ENCODE measurements at regions of chr10 and their contacts with region 1.

Region 1: DNA sequence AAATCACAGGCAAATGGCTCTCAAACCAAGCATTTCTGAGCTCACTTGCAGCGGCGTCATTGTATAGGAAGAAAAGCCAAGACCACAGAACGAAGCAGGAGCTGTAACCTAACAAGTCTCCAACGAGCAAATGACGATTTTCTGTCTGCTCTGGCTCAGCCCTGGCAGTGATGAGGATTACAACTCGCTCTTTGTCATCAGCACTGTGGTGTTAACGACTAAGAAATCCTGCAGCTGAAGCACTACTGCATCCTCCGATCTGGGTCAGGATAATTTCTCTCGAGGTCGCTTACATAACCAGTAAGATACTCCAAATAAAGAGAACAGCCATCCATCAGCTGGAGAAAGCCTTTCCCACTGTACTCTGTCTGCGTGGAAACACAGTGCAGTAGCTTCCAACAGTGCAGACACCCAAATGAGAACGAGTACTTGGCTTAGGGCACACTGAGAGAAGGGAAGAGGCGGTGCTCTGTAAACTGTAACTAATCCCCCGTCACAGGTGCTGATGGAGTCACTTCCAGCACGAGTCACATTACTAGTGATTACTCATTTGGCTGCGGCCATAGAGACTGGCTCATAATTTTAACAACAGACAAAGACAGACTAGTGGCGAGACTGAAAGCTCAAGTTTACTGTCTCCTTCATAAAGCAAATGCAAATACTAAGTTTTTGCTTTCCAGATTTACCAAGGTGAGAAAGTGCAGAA is 135.8 kb downstream of the NRBF2 start:
- DNase-seq: peak; percentile 98
- H3K4me3 ChIP-seq: peak overlapping the region; percentile 75 to 99 (median 85)
- H3K27ac ChIP-seq: peak overlapping the region; percentile 92
- H3K4me1 ChIP-seq: peaks cover 31% of the 10 kb centered on the region
- H3K27me3 ChIP-seq: no peaks in the 10 kb centered on the region
- CTCF ChIP-seq: peak in 1 of 2 donors; percentile 23
- POLR2A ChIP-seq: peak; percentile 99

Region 2: GRCh38 chr10:63166742-63167258 is 102.2 kb before region 1 on chr10:
- CTCF ChIA-PET with region 1: interaction called, 4 read pairs
- POLR2A ChIA-PET with region 1: no interaction called
- dilution Hi-C with region 1: no loop called
- intact Hi-C with region 1: loop called (anchors 2 kb)
- DNase-seq: peak; percentile 84
- H3K4me3 ChIP-seq: no peak overlapping the region
- H3K27ac ChIP-seq: no peak overlapping the region
- H3K4me1 ChIP-seq: no peaks in the 10 kb centered on the region
- H3K27me3 ChIP-seq: no peaks in the 10 kb centered on the region
- CTCF ChIP-seq: peak; percentile 61 to 62
- POLR2A ChIP-seq: no peak

Region 3: GRCh38 chr10:63217120-63217605 is 51.8 kb before region 1 on chr10:
- CTCF ChIA-PET with region 1: interaction called, 22 read pairs
- POLR2A ChIA-PET with region 1: interaction called, 7 read pairs
- dilution Hi-C with region 1: no loop called
- intact Hi-C with region 1: loop called (anchors 1 kb)
- DNase-seq: peak; percentile 74
- H3K4me3 ChIP-seq: no peak overlapping the region
- H3K27ac ChIP-seq: peak overlapping the region; percentile 30
- H3K4me1 ChIP-seq: peaks cover 4% of the 10 kb centered on the region
- H3K27me3 ChIP-seq: no peaks in the 10 kb centered on the region
- CTCF ChIP-seq: peak; percentile 34 to 38
- POLR2A ChIP-seq: no peak

Region 4: DNA sequence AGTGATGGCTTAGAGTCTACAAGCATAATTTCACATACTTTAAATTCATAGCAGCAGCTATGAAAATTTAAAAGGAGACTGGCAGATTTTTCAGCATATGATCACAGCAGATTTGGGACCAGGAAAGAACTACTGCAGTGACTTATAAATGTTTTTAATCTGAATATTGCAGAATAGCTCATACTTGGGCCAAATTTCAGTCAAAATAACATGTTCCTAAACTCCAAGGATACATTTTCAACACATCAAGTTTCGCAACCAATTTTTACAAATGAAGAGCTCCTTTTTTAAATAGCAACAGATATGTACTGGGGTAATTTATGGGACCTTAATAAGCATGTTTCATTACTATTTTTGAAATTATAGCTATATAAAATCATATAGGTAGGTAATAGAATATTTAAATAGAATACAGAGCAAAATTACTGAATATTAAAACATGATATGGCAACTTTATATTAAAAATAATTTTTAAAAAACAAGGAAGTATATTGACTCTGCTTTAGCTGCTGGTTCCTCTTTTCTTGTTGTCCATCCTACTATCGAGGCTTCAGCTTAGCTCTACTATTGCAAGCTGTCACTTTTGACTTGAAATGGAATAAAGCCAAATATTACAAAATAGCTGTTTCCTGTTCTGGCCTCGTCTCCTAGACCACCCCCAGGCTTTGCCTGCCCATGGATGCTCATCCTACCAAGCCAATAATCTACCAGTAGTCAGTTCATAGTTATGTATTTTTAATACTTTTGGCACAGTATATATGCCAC is 12.8 kb before region 1 on chr10:
- CTCF ChIA-PET with region 1: interaction called, 10 read pairs
- POLR2A ChIA-PET with region 1: interaction called, 10 read pairs
- dilution Hi-C with region 1: no loop called
- intact Hi-C with region 1: no loop called
- DNase-seq: peak; percentile 42
- H3K4me3 ChIP-seq: no peak overlapping the region
- H3K27ac ChIP-seq: no peak overlapping the region
- H3K4me1 ChIP-seq: peaks cover 21% of the 10 kb centered on the region
- H3K27me3 ChIP-seq: no peaks in the 10 kb centered on the region
- CTCF ChIP-seq: no peak
- POLR2A ChIP-seq: no peak

Region 5: GRCh38 chr10:63313066-63313717 is 44.2 kb after region 1 on chr10:
- CTCF ChIA-PET with region 1: no interaction called
- POLR2A ChIA-PET with region 1: no interaction called
- dilution Hi-C with region 1: no loop called
- intact Hi-C with region 1: no loop called
- DNase-seq: no peak
- H3K4me3 ChIP-seq: no peak overlapping the region
- H3K27ac ChIP-seq: no peak overlapping the region
- H3K4me1 ChIP-seq: no peaks in the 10 kb centered on the region
- H3K27me3 ChIP-seq: no peaks in the 10 kb centered on the region
- CTCF ChIP-seq: no peak
- POLR2A ChIP-seq: no peak

Region 6: GRCh38 chr10:63430097-63430998 is 161.4 kb after region 1 on chr10:
- CTCF ChIA-PET with region 1: interaction called, 3 read pairs
- POLR2A ChIA-PET with region 1: interaction called, 8 read pairs
- dilution Hi-C with region 1: no loop called
- intact Hi-C with region 1: loop called (anchors 1 kb)
- DNase-seq: peak; percentile 83
- H3K4me3 ChIP-seq: no peak overlapping the region
- H3K27ac ChIP-seq: peak overlapping the region; percentile 92
- H3K4me1 ChIP-seq: peaks cover 55% of the 10 kb centered on the region
- H3K27me3 ChIP-seq: no peaks in the 10 kb centered on the region
- CTCF ChIP-seq: no peak
- POLR2A ChIP-seq: no peak

Region 7: DNA sequence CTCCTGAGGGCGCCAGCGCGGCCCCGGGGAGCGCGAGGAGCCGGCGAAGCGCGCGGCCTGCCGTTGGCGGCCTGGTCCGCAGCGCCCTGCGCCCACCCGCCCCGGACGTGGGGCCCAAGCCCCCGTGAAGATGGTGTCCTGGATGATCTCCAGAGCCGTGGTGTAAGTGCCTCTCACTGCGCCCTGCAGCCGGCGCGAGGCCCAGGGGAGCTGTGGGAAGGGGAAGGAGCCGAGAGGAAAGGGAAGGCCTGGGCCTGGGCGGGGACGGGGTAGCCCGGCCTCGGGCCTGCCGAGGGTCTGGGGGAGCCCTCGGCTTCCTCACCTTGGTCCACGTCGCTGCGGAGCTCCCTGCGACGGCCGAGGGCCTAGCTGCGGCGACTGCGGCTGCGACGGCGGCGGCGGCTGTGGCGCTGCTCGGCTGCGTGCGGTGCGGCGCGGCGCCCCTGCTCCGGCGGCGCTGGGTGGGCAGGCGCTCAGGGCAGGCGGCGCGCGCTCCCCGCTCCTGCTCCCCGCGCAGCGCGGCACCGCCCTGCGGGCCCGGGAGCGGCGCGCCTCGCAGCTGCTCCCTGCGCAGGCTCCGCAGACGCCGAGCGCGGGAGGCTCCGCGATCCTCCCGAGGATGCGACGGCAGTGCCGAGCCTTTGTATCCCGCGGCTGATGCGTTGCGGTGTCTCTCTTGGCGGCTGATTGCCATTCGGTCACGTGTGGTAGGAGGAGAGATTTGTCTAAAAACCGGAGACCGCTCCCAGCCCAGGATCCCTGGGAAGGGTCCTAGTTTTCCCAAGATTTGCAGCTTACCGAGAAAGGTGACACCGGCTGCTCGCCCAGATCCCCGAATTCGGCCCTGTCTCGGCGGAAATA is 252.7 kb after region 1 on chr10:
- CTCF ChIA-PET with region 1: no interaction called
- POLR2A ChIA-PET with region 1: interaction called, 6 read pairs
- dilution Hi-C with region 1: no loop called
- intact Hi-C with region 1: loop called (anchors 1 kb)
- DNase-seq: peak; percentile 80
- H3K4me3 ChIP-seq: peak overlapping the region; percentile 50 to 93 (median 62)
- H3K27ac ChIP-seq: peak overlapping the region; percentile 90
- H3K4me1 ChIP-seq: peaks cover 7% of the 10 kb centered on the region
- H3K27me3 ChIP-seq: no peaks in the 10 kb centered on the region
- CTCF ChIP-seq: no peak
- POLR2A ChIP-seq: peak; percentile 74

Region 8: GRCh38 chr10:63707254-63707910 is 438.4 kb after region 1 on chr10:
- CTCF ChIA-PET with region 1: interaction called, 5 read pairs
- POLR2A ChIA-PET with region 1: interaction called, 3 read pairs
- dilution Hi-C with region 1: no loop called
- intact Hi-C with region 1: loop called (anchors 1 kb)
- DNase-seq: peak; percentile 99
- H3K4me3 ChIP-seq: no peak overlapping the region
- H3K27ac ChIP-seq: peak overlapping the region; percentile 74
- H3K4me1 ChIP-seq: peaks cover 32% of the 10 kb centered on the region
- H3K27me3 ChIP-seq: no peaks in the 10 kb centered on the region
- CTCF ChIP-seq: no peak
- POLR2A ChIP-seq: no peak